Activated CD4-positive, alpha-beta T cell treated with anti-CD3 and anti-CD28 coated beads for 36 hours (primary cell): ENCODE measurements at regions of chr3 and their contacts with region 1.

Region 1: DNA sequence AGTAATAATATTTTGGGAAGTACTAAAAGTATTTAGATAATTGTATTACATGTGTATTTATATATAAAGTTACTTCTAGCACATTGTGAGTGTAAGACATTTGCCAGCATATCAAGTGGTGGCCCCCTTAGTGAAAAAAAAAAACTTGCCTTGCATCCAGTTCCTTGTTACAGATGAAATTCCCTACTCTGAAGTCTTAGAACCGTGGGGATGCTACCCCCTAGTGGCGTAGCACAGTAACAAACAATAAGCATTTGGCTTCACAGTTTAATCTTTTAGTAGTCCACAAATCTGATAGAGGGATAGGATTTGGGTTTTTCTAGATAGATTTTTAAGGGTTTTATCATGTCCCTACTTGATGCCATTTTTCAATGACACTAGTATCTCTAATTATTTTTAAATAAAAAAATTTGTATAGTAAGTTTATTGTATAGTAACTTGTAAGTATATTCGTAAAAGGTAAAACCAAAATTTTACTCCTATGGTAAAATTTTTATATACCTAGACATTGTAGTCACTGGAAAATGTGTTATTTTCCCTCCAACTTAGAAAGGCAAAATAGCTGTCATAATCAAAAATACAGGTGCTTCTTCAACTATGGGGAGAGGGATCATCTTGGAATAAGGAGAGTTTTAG is 14.3 kb downstream of the SMC4 start:
- DNase-seq: peak; percentile 78
- ATAC-seq: peak; percentile 69
- H3K4me3 Mint-ChIP-seq: no peak overlapping the region
- H3K27ac Mint-ChIP-seq: no peak overlapping the region
- H3K4me1 Mint-ChIP-seq: peaks cover 2% of the 10 kb centered on the region
- H3K27me3 Mint-ChIP-seq: no peaks in the 10 kb centered on the region

Region 2: DNA sequence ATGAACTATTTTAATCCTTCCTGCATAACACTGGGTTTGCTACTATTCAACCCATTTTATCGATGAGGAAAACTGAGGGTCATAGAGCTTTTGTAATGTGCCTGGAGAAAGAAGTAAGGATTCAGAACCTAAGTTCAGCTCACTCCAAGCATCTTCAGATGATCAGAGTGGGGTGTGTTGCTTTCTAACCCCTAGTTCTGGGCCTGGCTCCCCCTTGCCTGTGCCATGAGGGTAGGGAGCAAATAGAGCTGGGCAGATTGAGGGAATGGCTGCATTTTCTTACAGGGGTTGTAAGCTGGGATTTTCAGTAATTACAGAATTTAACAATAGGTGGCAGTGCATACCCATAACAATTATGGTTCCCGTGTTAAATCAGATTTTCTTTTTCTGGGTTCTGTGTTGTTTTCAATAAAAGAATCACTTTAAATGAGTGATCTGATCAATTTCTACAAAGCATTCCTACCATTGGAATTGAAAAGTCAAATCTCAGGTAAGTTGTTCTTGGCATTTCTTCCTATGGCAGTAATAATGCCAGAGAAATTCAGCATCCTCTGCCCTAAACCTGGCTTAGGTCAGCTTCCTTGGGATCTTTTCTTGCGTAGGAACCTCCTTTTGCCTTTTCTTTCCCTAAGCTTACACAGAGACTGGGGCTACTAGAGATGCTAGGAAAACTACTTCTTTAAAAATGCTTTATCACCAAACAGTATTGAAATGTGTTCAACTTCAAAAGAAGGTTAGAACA is 528.9 kb before region 1 on chr3:
- CTCF ChIA-PET with region 1: interaction called, 14 read pairs
- POLR2A ChIA-PET with region 1: no interaction called
- intact Hi-C with region 1: loop called in 1 of 2 experiments (anchors 2 kb)
- DNase-seq: no peak
- ATAC-seq: peak; percentile 33
- H3K4me3 Mint-ChIP-seq: no peak overlapping the region
- H3K27ac Mint-ChIP-seq: no peak overlapping the region
- H3K4me1 Mint-ChIP-seq: no peaks in the 10 kb centered on the region
- H3K27me3 Mint-ChIP-seq: peaks cover 3% of the 10 kb centered on the region

Region 3: GRCh38 chr3:160027541-160028195 is 386.1 kb before region 1 on chr3:
- CTCF ChIA-PET with region 1: interaction called, 3 read pairs
- POLR2A ChIA-PET with region 1: no interaction called
- intact Hi-C with region 1: loop called (anchors 2 to 5 kb)
- DNase-seq: peak; percentile 40
- ATAC-seq: peak; percentile 92
- H3K4me3 Mint-ChIP-seq: no peak overlapping the region
- H3K27ac Mint-ChIP-seq: peak overlapping the region; percentile 73
- H3K4me1 Mint-ChIP-seq: peaks cover 15% of the 10 kb centered on the region
- H3K27me3 Mint-ChIP-seq: no peaks in the 10 kb centered on the region

Region 4: DNA sequence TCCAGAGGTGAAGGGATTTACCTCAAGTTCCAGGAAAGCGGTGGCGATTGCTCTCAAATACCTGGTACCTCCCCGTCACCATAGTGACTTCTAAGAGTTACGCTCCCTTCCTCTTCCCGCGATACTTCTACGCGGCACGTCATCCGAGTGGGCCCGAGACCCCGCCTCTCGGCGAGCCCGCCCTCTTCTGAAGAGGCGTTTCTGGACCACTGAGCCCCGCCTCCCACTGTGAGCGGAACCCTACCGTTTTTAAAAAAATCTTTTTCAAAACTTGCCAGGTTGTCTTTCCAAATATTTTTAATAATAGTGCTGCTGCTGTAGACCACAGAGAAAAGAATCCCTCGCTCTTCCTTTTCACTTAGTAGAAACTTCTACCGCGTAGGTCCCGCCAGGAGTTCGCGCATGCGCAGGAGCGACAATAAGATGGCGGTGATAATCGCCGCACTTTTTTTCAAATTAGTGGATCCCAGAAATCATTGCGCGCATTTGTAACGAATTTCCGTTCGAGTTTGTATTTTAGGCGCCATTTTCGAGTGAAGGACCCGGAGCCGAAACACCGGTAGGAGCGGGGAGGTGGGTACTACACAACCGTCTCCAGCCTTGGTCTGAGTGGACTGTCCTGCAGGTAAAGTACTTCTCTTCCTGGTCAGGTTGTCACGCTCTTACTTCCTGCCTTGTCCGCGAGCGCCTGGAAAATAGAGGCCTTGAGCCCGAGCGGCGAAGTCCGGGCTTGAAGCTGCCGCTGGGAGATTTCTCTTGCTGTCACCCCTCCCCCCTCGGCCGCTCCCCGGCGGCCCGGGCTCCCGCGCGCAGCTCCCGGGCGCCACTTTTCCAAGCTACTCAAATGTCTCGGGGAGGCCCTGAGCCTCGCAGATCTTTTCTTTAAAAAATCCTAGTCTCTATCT is 14.4 kb before region 1 on chr3 and contains the starts of genes IFT80 and SMC4:
- CTCF ChIA-PET with region 1: interaction called, 11 read pairs
- POLR2A ChIA-PET with region 1: interaction called, 24 read pairs
- intact Hi-C with region 1: no loop called
- DNase-seq: peak; percentile 98
- ATAC-seq: peak; percentile 93
- H3K4me3 Mint-ChIP-seq: peak within 1 kb of the TSS; percentile 91
- H3K27ac Mint-ChIP-seq: peak within 1 kb of the TSS; percentile 96
- H3K4me1 Mint-ChIP-seq: peaks cover 35% of the 10 kb centered on the region
- H3K27me3 Mint-ChIP-seq: peaks cover 7% of the 10 kb centered on the region
- total RNA-seq, gene IFT80: 15.0 to 18.1 TPM
- total RNA-seq, gene SMC4: 176 to 216 TPM

Region 5: GRCh38 chr3:160434071-160434470 is 20.3 kb after region 1 on chr3:
- CTCF ChIA-PET with region 1: interaction called, 18 read pairs
- POLR2A ChIA-PET with region 1: interaction called, 3 read pairs
- intact Hi-C with region 1: loop called in 1 of 2 experiments (anchors 2 kb)
- DNase-seq: no peak
- ATAC-seq: no peak
- H3K4me3 Mint-ChIP-seq: no peak overlapping the region
- H3K27ac Mint-ChIP-seq: no peak overlapping the region
- H3K4me1 Mint-ChIP-seq: peaks cover 23% of the 10 kb centered on the region
- H3K27me3 Mint-ChIP-seq: no peaks in the 10 kb centered on the region

Region 6: DNA sequence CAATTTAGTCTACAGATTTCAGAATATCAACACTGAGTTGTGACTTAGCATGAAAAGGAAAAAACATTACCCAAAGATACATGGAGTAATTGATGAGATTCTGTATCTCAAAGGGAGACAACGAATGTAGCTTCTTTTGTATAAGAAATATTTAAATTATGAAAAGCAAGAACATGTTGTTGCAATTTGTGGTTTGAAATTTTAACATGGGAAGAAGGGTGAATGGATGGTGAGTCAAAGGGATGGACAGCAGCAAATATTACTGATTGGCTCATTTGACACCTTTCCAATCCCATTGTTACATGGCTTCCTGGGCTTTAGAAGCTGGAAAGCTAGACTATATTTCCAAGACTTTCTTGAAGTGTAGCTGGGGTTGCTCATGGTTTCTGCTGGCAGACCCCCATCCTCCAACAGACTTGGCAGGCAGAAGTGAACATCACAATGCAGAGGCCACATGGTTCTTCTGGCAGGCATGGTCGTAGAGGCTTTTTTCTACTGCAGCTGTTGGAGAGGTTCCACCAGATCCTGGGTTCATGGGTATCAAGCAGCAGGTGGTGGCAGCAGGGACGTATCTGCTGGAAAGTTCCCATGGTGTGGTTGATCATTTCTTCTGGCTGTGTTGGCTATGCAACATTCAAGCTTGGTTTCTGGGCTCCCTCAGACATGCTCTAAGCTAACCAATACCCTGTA is 198.8 kb after region 1 on chr3:
- CTCF ChIA-PET with region 1: no interaction called
- POLR2A ChIA-PET with region 1: no interaction called
- intact Hi-C with region 1: no loop called
- DNase-seq: no peak
- ATAC-seq: no peak
- H3K4me3 Mint-ChIP-seq: no peak overlapping the region
- H3K27ac Mint-ChIP-seq: no peak overlapping the region
- H3K4me1 Mint-ChIP-seq: no peaks in the 10 kb centered on the region
- H3K27me3 Mint-ChIP-seq: peaks cover 21% of the 10 kb centered on the region

Region 7: GRCh38 chr3:160725338-160725737 is 311.6 kb after region 1 on chr3:
- CTCF ChIA-PET with region 1: no interaction called
- POLR2A ChIA-PET with region 1: no interaction called
- intact Hi-C with region 1: no loop called
- DNase-seq: no peak
- ATAC-seq: no peak
- H3K4me3 Mint-ChIP-seq: no peak overlapping the region
- H3K27ac Mint-ChIP-seq: no peak overlapping the region
- H3K4me1 Mint-ChIP-seq: no peaks in the 10 kb centered on the region
- H3K27me3 Mint-ChIP-seq: no peaks in the 10 kb centered on the region